Astrocyte of the cerebellum (primary cell): ENCODE measurements at regions of chr3 and their contacts with region 1.

Region 1: GRCh38 chr3:102235679-102236078 is 199.1 kb upstream of the ZPLD1 start:
- DNase-seq: no peak
- H3K4me3 ChIP-seq: no peak overlapping the region
- CTCF ChIP-seq: peak; percentile 55

Region 2: GRCh38 chr3:101809178-101810021 is 426.3 kb before region 1 on chr3:
- in situ Hi-C with region 1: loop called (anchors 5 kb)
- DNase-seq: peak; percentile 18
- H3K4me3 ChIP-seq: no peak overlapping the region
- CTCF ChIP-seq: peak; percentile 59

Region 3: DNA sequence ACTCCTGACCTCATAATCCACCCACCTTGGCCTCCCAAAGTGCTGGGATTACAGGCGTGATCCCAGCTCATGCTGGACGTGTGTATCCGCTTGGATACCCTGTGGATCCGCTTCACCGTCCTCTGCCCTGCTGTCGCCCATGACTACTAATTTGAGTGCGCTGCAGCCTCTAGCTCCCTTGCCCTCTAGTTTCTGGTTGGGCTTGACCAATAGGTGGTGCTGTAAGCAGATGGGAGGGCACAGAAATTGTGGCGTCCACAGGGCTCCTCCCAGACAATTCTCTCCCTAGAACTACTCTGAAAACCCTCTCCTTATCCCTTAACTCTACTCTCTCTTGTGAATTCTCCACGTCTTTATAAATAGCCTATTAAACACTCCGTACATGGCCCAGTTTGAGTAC is 235.3 kb after region 1 on chr3:
- in situ Hi-C with region 1: no loop called
- DNase-seq: no peak
- H3K4me3 ChIP-seq: no peak overlapping the region
- CTCF ChIP-seq: no peak